ENCODE measurements at regions of chr14 and their contacts with region 1.

Region 1: DNA sequence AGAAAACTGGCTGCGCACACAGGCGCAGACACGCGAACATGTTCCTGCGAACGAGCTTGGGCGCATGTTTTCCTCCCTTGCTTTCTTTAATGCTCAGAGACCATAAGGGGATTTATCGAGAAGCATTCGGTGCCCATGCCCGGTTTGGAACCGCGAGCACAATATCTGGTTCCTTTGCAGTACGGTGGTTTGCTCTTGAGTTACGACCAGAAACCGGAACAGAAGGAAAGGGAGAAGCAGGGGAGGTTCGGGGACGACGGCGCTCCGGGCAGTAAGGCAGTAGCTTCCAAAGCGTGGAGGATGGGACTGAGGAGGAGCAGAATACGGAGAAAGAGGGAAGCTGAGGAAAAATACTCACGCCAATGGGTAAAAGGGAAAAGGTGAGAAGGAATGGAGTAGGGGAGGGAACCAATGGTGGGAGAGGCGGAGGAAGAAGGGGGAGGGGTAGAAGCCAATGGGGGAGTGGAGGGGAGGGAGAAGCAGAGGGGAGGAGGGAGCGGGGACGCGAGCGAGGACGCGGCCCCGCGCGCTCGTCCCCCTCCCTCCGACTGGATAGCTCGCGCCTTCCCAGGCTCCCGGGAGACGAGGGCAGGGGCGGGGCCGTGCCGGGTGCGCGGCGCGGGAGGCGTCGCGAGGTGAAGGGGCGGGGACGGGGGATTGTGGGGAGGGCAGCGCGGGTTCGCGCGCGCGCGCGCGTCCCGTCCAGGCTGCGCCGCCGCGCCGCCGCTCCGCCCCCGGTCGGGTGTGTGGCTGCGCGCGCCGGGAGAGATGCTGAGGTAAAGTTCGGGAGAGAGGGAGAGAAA is 625 bp upstream of the ARHGAP5 start:
- DNase-seq: peak; percentile 95 to 96
- ATAC-seq: peak; percentile 82

Region 2: DNA sequence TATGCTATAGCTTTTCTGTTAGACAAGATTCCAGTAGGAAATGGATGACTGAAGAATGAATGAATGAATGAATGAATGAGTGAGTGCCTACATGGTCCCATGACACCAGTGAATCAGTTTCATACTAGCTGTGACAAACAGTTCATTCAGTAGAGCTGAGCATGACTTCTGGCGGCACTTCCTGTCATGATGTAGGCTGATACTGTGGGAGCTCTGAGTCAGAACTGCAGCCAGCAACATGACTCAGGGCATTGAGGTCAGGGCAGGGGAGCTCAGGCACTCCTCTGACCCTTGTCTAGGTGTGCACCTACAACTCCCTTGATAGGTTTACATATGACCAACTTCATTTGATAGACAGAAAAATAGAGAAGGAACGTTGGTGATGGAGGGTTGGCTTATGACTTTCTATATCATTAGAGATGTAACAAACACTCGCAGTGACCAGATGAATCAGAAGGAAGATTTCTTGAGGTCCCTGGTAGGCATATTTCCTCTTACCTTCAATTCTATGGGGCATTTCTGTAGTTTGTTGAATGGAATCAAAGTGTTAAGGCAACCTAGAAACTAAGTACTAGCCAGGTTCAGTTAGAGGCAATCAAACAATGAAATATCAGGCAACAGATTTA is 138.6 kb before region 1 on chr14:
- intact Hi-C with region 1: loop called in 1 of 2 experiments (anchors 10 kb)
- DNase-seq: peak; percentile 55 to 77
- ATAC-seq: peak; percentile 81

Region 3: GRCh38 chr14:32186248-32186647 is 109.8 kb after region 1 on chr14:
- intact Hi-C with region 1: no loop called
- DNase-seq: no peak
- ATAC-seq: no peak

Region 4: DNA sequence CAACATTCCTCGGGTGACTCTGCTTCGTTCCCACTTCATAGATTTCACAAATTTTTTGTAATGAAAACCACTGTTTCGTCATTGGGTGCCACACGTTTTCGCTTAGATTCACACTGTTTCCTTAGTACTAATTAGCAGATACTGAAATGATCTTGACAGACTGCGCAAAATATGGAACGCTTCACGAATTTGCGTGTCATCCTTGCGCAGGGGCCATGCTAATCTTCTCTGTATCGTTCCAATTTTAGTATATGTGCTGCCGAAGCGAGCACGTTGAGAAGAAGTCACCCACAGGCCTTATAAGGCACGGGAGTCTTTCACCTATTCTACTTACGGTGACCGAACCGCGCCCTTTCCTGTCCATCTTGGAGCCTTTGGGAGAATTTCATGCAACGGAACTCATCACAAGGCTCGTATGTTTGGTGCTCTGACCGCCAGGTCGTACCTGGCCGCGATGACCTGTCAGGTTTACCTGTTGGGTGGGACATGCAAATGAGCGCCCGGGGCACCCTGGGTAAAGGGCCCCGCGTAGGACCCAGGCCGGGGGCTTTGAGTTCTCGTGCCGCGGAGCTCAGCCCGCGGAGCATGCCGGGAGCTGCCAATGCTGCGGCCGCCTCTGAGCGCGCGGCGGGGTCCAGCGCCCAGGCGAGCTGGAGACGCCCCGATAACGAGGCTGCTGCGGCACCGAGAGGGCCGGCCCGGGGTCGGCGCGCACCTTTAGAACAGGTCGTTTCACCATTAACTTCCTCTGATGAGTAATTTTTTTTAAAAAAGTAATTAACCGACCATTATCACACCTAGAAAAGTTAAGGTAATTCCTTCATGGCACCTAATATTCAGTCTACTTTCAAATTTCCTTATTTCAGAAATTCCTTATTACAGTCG is 126.8 kb after region 1 on chr14 and contains the start of gene RNU6-8:
- intact Hi-C with region 1: loop called in 1 of 2 experiments (anchors 5 kb)
- DNase-seq: peak; percentile 88 to 90
- ATAC-seq: peak; percentile 88
- total RNA-seq, gene RNU6-8: not detected

Region 5: DNA sequence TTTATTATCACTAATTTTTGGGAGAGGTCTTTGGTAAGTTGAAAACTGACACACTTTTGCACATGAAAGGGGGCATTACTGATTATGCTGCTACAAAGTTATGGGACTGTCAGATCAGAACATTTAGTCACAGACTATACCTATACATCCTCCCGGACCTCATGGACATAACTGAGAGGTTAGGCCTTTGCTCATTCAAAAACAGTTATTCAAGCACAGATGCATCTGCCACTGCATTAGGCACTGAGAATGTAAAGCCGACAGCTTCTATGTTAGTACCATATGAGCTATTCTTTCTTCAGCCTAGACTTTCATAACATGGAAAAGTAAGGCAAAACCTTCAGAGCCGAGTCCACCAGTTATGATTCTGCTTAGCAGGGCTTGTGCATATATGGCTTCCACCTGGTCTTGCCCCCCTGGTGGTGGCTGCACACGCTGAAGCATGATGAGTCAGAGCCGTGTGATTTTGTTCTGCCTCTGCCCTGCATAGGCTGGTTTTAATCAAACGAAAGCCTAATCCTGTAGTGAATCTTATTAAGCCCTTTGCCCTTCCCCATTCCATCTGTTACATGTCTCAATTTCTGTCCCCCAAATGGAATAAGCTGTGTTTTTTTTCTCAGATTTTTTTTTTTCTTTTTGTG is 148.4 kb after region 1 on chr14:
- intact Hi-C with region 1: no loop called
- DNase-seq: peak; percentile 20 to 33
- ATAC-seq: no peak

Region 6: GRCh38 chr14:32252030-32252670 is 175.7 kb after region 1 on chr14:
- intact Hi-C with region 1: loop called in 1 of 2 experiments (anchors 5 kb)
- DNase-seq: peak; percentile 28 to 41
- ATAC-seq: peak; percentile 90

Region 7: DNA sequence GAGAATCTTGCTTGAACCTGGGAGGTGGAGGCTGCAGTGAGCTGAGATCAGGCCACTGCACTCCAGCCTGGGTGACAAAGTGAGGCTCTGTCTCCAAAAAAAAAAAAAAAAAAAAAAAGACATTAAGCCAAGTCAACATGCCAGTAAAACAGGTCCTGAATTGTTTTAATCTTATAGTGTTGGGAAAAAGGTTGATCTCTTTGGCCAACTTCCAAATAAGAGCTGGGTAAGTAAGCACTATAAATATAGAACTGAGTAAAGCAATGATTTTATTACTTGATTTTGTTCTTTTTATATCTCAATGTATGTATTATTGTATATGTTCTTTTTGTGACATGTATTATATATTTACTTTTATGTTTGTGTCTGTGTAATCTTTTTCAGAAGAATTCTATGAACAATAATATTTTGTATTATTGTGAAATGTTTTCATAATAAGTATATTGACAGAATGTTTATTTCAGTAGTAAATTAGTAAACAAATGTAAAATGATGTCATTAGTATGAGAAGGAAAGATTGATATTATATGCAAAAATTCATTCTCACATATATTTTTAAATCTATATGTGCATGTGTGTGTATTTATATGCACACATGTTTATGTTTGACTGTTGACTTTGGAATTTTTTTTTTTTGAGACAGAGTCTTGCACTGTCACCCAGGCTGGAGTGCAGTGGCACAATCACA is 243.0 kb after region 1 on chr14:
- intact Hi-C with region 1: no loop called
- DNase-seq: no peak
- ATAC-seq: peak; percentile 93

Region 8: DNA sequence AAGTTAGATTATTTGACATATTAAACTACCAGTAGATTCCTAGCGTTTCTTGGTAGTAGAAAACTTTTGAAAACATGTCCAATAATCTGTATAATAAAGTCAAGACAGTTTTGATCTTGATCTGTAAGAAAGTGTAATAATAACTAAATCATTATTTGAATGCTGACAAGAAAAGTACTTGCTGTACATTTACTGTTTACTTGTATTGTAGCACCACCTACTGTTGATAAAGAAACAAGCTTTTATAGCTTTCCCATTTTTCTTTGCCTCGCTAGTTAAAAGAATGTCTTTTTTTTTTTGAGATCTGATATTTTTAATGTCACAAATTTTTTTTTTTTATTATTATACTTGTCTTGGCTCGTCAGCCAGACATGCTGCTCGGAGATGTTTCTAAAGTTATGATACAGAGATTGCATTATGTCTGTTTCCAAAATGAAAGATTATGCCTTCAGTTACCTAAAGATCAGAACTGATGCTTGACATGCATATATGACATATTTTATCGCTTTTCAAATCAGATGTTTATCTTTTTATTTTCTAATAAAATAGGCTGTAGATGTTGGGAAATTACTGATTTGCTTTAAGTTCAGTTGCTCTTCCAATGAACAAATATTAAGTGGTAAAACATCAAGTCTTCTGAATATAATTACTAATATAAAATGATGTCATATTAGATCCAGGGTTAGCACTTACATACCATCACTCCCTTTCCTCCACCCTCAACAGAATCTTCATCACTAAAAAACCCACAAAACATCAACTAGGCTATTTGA is 393.1 kb after region 1 on chr14:
- intact Hi-C with region 1: loop called in 1 of 2 experiments (anchors 10 kb)
- DNase-seq: no peak
- ATAC-seq: peak; percentile 64

Region 9: GRCh38 chr14:32846821-32847365 is 770.4 kb after region 1 on chr14:
- intact Hi-C with region 1: no loop called
- DNase-seq: no peak
- ATAC-seq: no peak